WTC11 (cell line): ENCODE measurements at regions of chr14 and their contacts with region 1.

Region 1: DNA sequence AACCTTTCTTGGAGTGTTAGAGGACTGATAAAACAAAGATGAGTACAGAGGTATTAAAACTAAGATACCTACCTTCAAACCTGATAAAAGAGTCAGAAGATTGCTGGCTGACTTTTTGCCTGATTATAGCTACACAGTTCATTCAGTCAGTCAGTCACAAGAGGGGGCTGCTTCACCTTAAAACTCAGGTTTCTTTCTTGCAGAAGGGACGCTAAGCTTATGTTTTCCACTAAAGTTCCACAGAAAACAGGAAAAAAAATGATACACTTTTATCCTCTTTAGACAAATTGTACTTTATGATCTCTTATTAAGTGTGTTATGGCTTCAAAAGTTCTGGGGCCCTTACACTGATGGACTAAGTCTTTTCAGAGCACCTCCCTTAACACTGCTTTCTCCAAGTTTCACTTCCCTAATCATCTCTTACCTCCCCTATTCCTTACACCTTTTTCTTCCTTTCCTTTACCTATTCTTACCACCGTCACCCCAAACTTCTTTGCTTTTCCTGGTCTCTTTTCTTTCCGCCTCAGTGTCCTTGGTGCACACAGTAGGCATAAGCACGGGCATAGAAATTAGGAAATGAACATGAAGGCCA is 448.7 kb upstream of the OR4E1 start:
- DNase-seq: no peak
- ATAC-seq: peak; percentile 48; the same call in 1 of the 2 replicates
- H3K4me3 Mint-ChIP-seq: no peak overlapping the region
- H3K27ac Mint-ChIP-seq: no peak overlapping the region
- H3K4me1 Mint-ChIP-seq: no peaks in the 10 kb centered on the region
- H3K27me3 Mint-ChIP-seq: no peaks in the 10 kb centered on the region; the same call in 1 of the 2 replicates
- CTCF ChIP-seq: no peak

Region 2: GRCh38 chr14:22106700-22107697 is 15.3 kb before region 1 on chr14:
- CTCF ChIA-PET with region 1: interaction called, 39 read pairs
- POLR2A ChIA-PET with region 1: no interaction called
- DNase-seq: no peak
- ATAC-seq: peak; percentile 28; the same call in 1 of the 2 replicates
- H3K4me3 Mint-ChIP-seq: no peak overlapping the region
- H3K27ac Mint-ChIP-seq: no peak overlapping the region
- H3K4me1 Mint-ChIP-seq: no peaks in the 10 kb centered on the region
- H3K27me3 Mint-ChIP-seq: no peaks in the 10 kb centered on the region; the same call in 1 of the 2 replicates
- CTCF ChIP-seq: no peak

Region 3: DNA sequence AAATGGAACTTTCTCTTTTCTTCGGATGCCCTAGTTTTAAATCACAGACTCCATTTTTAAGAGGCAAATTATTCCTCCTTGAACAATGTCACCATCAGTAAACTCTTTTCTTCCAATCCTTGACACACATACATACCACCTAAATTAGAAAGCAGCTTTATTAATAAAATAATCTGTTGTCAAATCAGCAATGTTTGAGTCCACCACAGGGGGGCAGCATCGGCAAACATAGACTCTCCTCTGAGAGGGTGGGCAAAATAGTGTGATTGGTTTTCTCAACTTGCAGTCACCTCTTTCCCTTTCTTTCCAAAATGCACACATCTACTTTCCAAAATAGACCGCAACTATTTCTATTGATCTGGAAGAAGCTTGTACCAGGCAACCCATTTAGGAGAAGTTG is 10.3 kb before region 1 on chr14:
- CTCF ChIA-PET with region 1: interaction called, 39 read pairs
- POLR2A ChIA-PET with region 1: no interaction called
- DNase-seq: peak; percentile 63
- ATAC-seq: no peak
- H3K4me3 Mint-ChIP-seq: no peak overlapping the region
- H3K27ac Mint-ChIP-seq: no peak overlapping the region
- H3K4me1 Mint-ChIP-seq: peaks cover 18% of the 10 kb centered on the region
- H3K27me3 Mint-ChIP-seq: 0 out of 2 replicates have a peak, but pooled peaks cover 4% of the 10 kb centered on the region
- CTCF ChIP-seq: peak; percentile 49

Region 4: GRCh38 chr14:22163051-22163450 is 40.7 kb after region 1 on chr14:
- CTCF ChIA-PET with region 1: interaction called, 10 read pairs
- POLR2A ChIA-PET with region 1: no interaction called
- DNase-seq: no peak
- ATAC-seq: peak; percentile 71
- H3K4me3 Mint-ChIP-seq: no peak overlapping the region
- H3K27ac Mint-ChIP-seq: no peak overlapping the region
- H3K4me1 Mint-ChIP-seq: peaks cover 24% of the 10 kb centered on the region
- H3K27me3 Mint-ChIP-seq: no peaks in the 10 kb centered on the region
- CTCF ChIP-seq: no peak

Region 5: DNA sequence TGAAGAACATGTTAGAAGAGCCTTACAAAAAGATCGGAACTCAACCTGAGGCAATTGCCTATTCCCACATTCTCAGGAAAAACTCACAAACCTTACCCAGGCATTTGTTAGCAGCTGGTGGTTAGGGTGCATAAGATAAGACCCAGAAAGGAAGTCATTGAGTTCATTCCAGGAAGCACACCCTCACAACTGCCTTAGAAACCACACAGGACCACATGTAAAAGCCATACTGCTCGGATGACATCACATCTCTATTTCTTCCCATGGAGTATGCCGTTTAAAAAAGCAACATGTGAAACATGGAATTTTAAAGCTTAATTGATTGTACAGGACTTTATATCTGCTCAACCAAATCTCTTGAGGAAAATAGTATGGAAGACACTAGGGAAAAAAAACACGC is 55.5 kb after region 1 on chr14:
- CTCF ChIA-PET with region 1: interaction called, 11 read pairs
- POLR2A ChIA-PET with region 1: no interaction called
- DNase-seq: no peak
- ATAC-seq: no peak
- H3K4me3 Mint-ChIP-seq: no peak overlapping the region
- H3K27ac Mint-ChIP-seq: no peak overlapping the region
- H3K4me1 Mint-ChIP-seq: peaks cover 5% of the 10 kb centered on the region
- H3K27me3 Mint-ChIP-seq: no peaks in the 10 kb centered on the region
- CTCF ChIP-seq: no peak

Region 6: DNA sequence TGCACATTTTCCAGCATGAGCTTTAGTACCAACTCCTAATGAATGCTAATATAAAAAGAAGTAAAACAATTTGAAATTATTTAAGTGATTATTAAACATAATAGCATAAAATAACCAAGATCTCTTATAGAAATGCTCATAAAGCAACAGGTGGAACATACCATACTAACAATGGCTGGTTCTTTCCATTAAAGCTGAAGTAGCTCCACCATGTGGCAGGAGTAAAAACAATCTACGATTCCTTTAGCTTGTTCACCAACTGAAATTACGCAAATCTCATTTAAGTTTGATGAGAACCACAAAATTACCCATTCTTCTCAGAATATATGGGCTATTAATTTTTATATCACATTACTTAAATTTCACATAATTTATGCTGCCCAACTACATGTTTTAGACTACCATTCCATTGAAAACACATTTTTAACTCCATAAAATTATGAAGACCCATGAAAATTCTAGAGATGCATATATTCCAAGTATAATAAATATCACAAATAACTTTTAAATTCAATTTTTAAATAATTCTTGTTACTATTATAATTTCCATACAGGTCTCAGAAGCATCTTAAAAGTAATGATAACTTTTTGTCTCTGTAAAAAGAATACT is 253.1 kb after region 1 on chr14:
- CTCF ChIA-PET with region 1: interaction called, 14 read pairs
- POLR2A ChIA-PET with region 1: no interaction called
- DNase-seq: no peak
- ATAC-seq: no peak
- H3K4me3 Mint-ChIP-seq: no peak overlapping the region
- H3K27ac Mint-ChIP-seq: no peak overlapping the region
- H3K4me1 Mint-ChIP-seq: no peaks in the 10 kb centered on the region
- H3K27me3 Mint-ChIP-seq: peaks cover 3% of the 10 kb centered on the region; the same call in 1 of the 2 replicates
- CTCF ChIP-seq: no peak